ENCODE measurements at regions of chr6 and their contacts with region 1.

Region 1: DNA sequence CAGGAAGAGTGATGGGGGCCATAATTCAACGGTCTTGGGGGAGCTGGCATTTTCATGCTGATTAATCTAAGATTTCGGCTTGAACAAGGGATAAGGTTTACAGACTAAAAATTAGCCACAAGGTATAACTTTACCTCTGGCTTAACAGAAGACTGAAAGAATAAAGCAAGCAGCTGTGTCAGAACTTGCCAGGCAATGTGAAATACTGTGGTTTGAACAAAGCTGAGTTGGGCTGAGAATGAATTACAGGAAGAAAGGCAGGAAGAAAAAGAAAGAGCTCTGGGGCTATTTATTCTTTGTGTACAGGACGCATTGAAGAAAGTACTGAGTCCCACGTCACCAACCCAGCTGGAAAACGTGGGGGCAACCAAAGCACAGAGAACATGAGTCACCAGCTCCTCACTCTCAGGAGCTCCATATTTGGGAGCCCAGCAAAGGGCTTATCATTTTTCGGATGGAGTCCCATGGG is 121.5 kb upstream of the NEDD9 start:
- DNase-seq: peak; percentile 93
- H3K4me3 Mint-ChIP-seq: peak overlapping the region; percentile 54
- H3K27ac Mint-ChIP-seq: peak overlapping the region; percentile 96
- H3K4me1 Mint-ChIP-seq: peaks cover 82% of the 10 kb centered on the region
- H3K27me3 Mint-ChIP-seq: no peaks in the 10 kb centered on the region

Region 2: GRCh38 chr6:11324453-11325015 is 29.4 kb before region 1 on chr6:
- CTCF ChIA-PET with region 1: no interaction called
- intact Hi-C with region 1: loop called (anchors 1 kb)
- DNase-seq: peak; percentile 70
- H3K4me3 Mint-ChIP-seq: peak overlapping the region; percentile 16
- H3K27ac Mint-ChIP-seq: peak overlapping the region; percentile 80
- H3K4me1 Mint-ChIP-seq: peaks cover 42% of the 10 kb centered on the region
- H3K27me3 Mint-ChIP-seq: no peaks in the 10 kb centered on the region

Region 3: DNA sequence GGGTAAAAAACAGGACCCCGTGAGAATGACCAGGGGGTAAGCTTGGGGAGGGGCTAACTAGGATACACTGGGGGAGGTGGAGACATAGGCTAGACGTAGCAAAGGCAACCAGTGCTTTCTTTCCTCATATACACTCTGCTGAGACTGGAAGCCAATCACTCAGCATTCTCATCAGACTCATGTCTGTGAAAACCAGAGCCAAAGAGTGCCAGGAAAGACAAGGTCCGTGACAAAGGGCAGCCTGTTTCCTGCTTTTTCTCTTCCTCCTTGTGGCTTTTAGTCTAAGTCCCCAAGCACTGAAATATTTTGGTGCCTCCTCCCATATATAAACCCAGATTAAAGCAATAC is 23.6 kb before region 1 on chr6:
- CTCF ChIA-PET with region 1: interaction called, 4 read pairs
- intact Hi-C with region 1: loop called (anchors 1 kb)
- DNase-seq: no peak
- H3K4me3 Mint-ChIP-seq: no peak overlapping the region
- H3K27ac Mint-ChIP-seq: peak overlapping the region; percentile 68
- H3K4me1 Mint-ChIP-seq: peaks cover 58% of the 10 kb centered on the region
- H3K27me3 Mint-ChIP-seq: no peaks in the 10 kb centered on the region

Region 4: GRCh38 chr6:11414176-11414963 is 60.4 kb after region 1 on chr6:
- CTCF ChIA-PET with region 1: no interaction called
- intact Hi-C with region 1: no loop called
- DNase-seq: peak; percentile 60
- H3K4me3 Mint-ChIP-seq: no peak overlapping the region
- H3K27ac Mint-ChIP-seq: no peak overlapping the region
- H3K4me1 Mint-ChIP-seq: peaks cover 33% of the 10 kb centered on the region
- H3K27me3 Mint-ChIP-seq: no peaks in the 10 kb centered on the region

Measured in activated naive CD4-positive, alpha-beta T cell treated with anti-CD3 and anti-CD28 coated beads for 36 hours (primary cell).